Endothelial cell of umbilical vein (primary cell): ENCODE measurements at regions of chr1 and their contacts with region 1.

Region 1: GRCh38 chr1:117605774-117606648 is at the start of gene TENT5C:
- DNase-seq: peak; percentile 96
- H3K4me3 ChIP-seq: peak within 1 kb of the TSS; percentile 68 to 87 (median 82)
- H3K27ac ChIP-seq: no peak within 1 kb of the TSS
- H3K4me1 ChIP-seq: peaks cover 15% of the 10 kb centered on the region
- H3K27me3 ChIP-seq: peaks cover 29 to 44% of the 10 kb centered on the region in 2 experiments
- CTCF ChIP-seq: no peak
- POLR2A ChIP-seq: peak; percentile 61
- total RNA-seq, gene TENT5C: 0.12 and 0.22 TPM in 2 replicates

Region 2: DNA sequence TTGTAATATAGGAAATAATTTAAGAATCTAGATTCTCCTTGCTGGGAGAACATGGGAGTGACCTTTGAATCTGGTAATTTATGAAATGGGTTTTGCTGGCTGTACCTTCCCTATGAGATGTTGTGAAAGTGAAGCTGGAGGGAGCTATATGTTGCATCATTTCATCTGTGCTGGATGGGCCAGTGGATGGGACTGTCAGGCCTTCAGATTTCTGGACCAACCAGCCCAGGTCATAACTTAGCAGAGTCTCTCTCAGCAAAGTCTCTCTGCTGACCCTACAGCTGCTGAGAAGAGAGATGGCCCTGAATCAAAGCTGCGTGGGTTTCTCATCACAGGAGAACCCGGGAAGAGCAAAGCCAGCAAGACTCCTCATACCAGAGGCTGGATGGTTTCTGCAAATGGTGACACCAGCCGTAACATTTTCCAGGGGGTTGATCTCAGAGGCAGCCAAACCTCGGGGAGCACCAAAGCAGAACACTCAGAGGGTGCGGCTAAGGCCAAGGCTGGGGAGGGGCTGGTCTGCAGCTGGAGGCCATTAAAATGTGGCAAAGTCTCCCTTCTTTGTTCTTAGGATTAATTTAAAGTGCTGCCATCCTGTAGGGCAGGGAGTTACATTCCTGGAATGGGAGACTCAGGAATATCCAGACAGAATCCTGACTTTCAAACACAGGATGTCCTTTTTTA is 714.5 kb before region 1 on chr1:
- CTCF ChIA-PET with region 1: no interaction called
- POLR2A ChIA-PET with region 1: no interaction called
- dilution Hi-C with region 1: no loop called
- intact Hi-C with region 1: loop called (anchors 10 kb)
- DNase-seq: no peak
- H3K4me3 ChIP-seq: no peak overlapping the region
- H3K27ac ChIP-seq: no peak overlapping the region
- H3K4me1 ChIP-seq: peaks cover 5% of the 10 kb centered on the region
- H3K27me3 ChIP-seq: no peaks in the 10 kb centered on the region
- CTCF ChIP-seq: no peak
- POLR2A ChIP-seq: no peak

Region 3: GRCh38 chr1:117466761-117467160 is 139.2 kb before region 1 on chr1:
- CTCF ChIA-PET with region 1: no interaction called
- POLR2A ChIA-PET with region 1: no interaction called
- dilution Hi-C with region 1: no loop called
- intact Hi-C with region 1: loop called (anchors 5 kb)
- DNase-seq: peak; percentile 86
- H3K4me3 ChIP-seq: peak overlapping the region in 2 of 3 experiments; percentile 52 to 53
- H3K27ac ChIP-seq: peak overlapping the region; percentile 89
- H3K4me1 ChIP-seq: peaks cover 28% of the 10 kb centered on the region
- H3K27me3 ChIP-seq: no peaks in the 10 kb centered on the region
- CTCF ChIP-seq: no peak
- POLR2A ChIP-seq: no peak

Region 4: DNA sequence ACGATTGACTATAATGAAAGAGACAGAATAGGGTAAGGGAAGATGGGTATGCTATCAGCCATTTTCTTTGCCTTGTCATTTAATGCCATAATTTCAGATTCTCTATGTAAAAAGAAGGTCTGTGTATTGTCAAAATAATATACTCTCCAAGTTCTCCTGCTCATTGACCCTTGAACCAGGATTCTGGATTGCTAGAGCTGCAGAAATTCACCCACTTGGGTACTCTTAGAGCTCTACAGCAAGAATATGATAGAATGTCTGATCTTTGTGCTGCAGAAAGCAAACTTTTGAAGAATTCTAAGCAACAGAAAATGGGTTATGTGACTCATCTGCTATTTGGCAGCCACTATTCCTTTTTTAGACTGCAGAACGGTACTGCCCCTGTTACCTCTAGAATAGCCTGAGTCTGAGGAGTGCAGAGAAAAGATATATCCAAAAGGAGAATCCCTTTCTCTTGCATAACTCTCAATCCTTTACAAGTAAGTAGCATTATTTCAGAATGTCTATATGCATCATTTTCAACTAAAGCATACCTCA is 78.4 kb before region 1 on chr1:
- CTCF ChIA-PET with region 1: interaction called, 3 read pairs
- POLR2A ChIA-PET with region 1: no interaction called
- dilution Hi-C with region 1: no loop called
- intact Hi-C with region 1: loop called (anchors 5 kb)
- DNase-seq: no peak
- H3K4me3 ChIP-seq: no peak overlapping the region
- H3K27ac ChIP-seq: no peak overlapping the region
- H3K4me1 ChIP-seq: no peaks in the 10 kb centered on the region
- H3K27me3 ChIP-seq: no peaks in the 10 kb centered on the region
- CTCF ChIP-seq: no peak
- POLR2A ChIP-seq: no peak

Region 5: DNA sequence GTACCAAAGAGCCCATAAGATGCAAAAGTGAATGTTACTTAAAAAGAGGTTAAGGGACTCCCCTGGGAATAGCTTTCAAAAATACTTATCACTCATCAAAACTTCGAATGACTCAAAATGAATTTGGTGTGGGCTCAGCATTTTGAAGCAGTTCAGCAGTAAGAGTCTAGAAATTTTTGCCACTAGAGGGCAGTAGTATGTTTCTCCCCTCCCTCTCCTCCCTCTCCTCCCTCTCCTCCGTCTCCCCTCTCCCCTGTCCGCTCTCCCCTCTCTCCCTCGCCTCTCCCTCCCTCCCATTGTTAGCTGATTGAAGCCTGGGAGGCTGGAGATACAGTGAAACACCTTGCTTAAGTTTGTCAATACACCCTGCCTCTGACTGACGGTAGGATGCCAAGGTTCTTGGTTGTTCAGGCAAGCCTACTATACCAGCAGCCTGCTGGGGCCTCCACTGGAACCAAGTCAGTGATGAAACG is 71.0 kb before region 1 on chr1:
- CTCF ChIA-PET with region 1: interaction called, 7 read pairs
- POLR2A ChIA-PET with region 1: no interaction called
- dilution Hi-C with region 1: no loop called
- intact Hi-C with region 1: loop called (anchors 5 kb)
- DNase-seq: peak; percentile 47
- H3K4me3 ChIP-seq: no peak overlapping the region
- H3K27ac ChIP-seq: no peak overlapping the region
- H3K4me1 ChIP-seq: no peaks in the 10 kb centered on the region
- H3K27me3 ChIP-seq: peaks cover 0 to 2% of the 10 kb centered on the region in 2 experiments
- CTCF ChIP-seq: peak; percentile 50 to 74
- POLR2A ChIP-seq: no peak

Region 6: GRCh38 chr1:117674521-117675397 is 68.7 kb after region 1 on chr1:
- CTCF ChIA-PET with region 1: interaction called, 4 read pairs
- POLR2A ChIA-PET with region 1: no interaction called
- dilution Hi-C with region 1: no loop called
- intact Hi-C with region 1: loop called (anchors 5 kb)
- DNase-seq: no peak
- H3K4me3 ChIP-seq: no peak overlapping the region
- H3K27ac ChIP-seq: no peak overlapping the region
- H3K4me1 ChIP-seq: peaks cover 14% of the 10 kb centered on the region
- H3K27me3 ChIP-seq: no peaks in the 10 kb centered on the region
- CTCF ChIP-seq: no peak
- POLR2A ChIP-seq: no peak

Region 7: DNA sequence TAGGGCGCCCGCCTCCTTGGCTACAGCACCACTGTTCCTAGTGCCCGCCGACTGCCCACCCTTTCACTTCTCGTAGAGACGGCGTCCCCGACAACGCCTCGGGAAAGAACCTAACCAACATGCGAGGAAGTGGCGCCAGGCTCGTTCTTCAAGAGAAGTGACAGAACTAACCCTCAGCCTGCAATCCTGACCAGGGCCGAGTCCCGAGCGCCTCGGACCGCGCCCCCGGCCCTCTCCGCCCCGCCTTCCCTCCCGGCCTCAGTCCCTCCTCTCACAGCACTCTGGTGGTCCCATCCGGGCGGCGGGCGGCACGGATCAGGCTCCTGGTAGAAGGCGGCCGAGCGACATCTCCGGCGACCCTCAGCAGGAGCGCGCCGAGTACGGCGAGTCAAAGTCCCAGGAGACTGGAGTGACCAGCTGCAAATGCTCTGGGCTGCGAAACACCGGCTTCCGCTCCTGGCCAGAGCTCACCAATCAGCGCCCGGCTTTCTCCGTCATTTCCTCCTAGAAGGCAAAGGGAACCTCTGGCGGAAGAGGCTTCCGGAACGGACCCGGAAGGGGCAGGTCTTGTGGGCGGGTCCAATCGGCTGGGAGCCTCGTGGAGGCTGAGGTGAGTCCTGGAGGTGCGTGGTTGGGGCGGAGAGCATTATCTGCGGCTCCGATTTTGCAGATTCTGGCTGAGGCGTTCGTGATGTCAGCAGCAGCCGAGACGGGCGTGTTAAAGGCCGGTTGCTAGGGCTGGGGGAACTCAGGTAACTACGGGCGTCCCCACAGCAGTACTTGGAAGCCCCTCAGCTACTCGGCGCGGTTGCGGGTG is 323.4 kb after region 1 on chr1 and contains the starts of genes GDAP2 and WDR3:
- CTCF ChIA-PET with region 1: interaction called, 3 read pairs
- POLR2A ChIA-PET with region 1: no interaction called
- dilution Hi-C with region 1: no loop called
- intact Hi-C with region 1: loop called (anchors 2 kb)
- DNase-seq: peak; percentile 95
- H3K4me3 ChIP-seq: peak within 1 kb of the TSS; percentile 61 to 93 (median 77)
- H3K27ac ChIP-seq: peak within 1 kb of the TSS; percentile 52
- H3K4me1 ChIP-seq: peaks cover 16% of the 10 kb centered on the region
- H3K27me3 ChIP-seq: no peaks in the 10 kb centered on the region
- CTCF ChIP-seq: no peak
- POLR2A ChIP-seq: no peak
- total RNA-seq, gene GDAP2: 20.7 and 21.5 TPM in 2 replicates
- total RNA-seq, gene WDR3: 27.7 and 29.3 TPM in 2 replicates